PC-9 (cell line): ENCODE measurements at regions of chr20 and their contacts with region 1.

Region 1: GRCh38 chr20:53869466-53870258 is 200.7 kb downstream of the BCAS1 start:
- DNase-seq: peak; percentile 64 to 76
- H3K4me3 ChIP-seq: no peak overlapping the region
- H3K27ac ChIP-seq: peak overlapping the region; percentile 77
- H3K4me1 ChIP-seq: peaks cover 68% of the 10 kb centered on the region
- H3K27me3 ChIP-seq: no peaks in the 10 kb centered on the region
- CTCF ChIP-seq: peak; percentile 90

Region 2: GRCh38 chr20:53539516-53539915 is 330.1 kb before region 1 on chr20:
- CTCF ChIA-PET with region 1: no interaction called
- POLR2A ChIA-PET with region 1: no interaction called
- intact Hi-C with region 1: no loop called
- DNase-seq: no peak
- H3K4me3 ChIP-seq: no peak overlapping the region
- H3K27ac ChIP-seq: no peak overlapping the region
- H3K4me1 ChIP-seq: no peaks in the 10 kb centered on the region
- H3K27me3 ChIP-seq: no peaks in the 10 kb centered on the region
- CTCF ChIP-seq: no peak

Region 3: GRCh38 chr20:53594068-53595017 is 275.3 kb before region 1 on chr20:
- CTCF ChIA-PET with region 1: no interaction called
- POLR2A ChIA-PET with region 1: interaction called, 9 read pairs
- intact Hi-C with region 1: loop called (anchors 5 kb)
- DNase-seq: peak; percentile 73 to 98
- H3K4me3 ChIP-seq: peak overlapping the region; percentile 99
- H3K27ac ChIP-seq: peak overlapping the region; percentile 98
- H3K4me1 ChIP-seq: peaks cover 59% of the 10 kb centered on the region
- H3K27me3 ChIP-seq: no peaks in the 10 kb centered on the region
- CTCF ChIP-seq: no peak; the same call in 1 of the 2 replicates

Region 4: GRCh38 chr20:53656293-53657202 is 213.1 kb before region 1 on chr20:
- CTCF ChIA-PET with region 1: no interaction called
- POLR2A ChIA-PET with region 1: interaction called, 11 read pairs
- intact Hi-C with region 1: no loop called
- DNase-seq: peak in 1 of 2 experiments; percentile 78
- H3K4me3 ChIP-seq: peak overlapping the region; percentile 12; the same call in 1 of the 2 replicates
- H3K27ac ChIP-seq: peak overlapping the region; percentile 84
- H3K4me1 ChIP-seq: peaks cover 65% of the 10 kb centered on the region
- H3K27me3 ChIP-seq: no peaks in the 10 kb centered on the region
- CTCF ChIP-seq: no peak

Region 5: GRCh38 chr20:53786445-53787267 is 83.0 kb before region 1 on chr20:
- CTCF ChIA-PET with region 1: no interaction called
- POLR2A ChIA-PET with region 1: interaction called, 4 read pairs
- intact Hi-C with region 1: loop called (anchors 1 kb)
- DNase-seq: peak; percentile 44 to 97
- H3K4me3 ChIP-seq: peak overlapping the region; percentile 40; the same call in 1 of the 2 replicates
- H3K27ac ChIP-seq: peak overlapping the region; percentile 98
- H3K4me1 ChIP-seq: peaks cover 68% of the 10 kb centered on the region
- H3K27me3 ChIP-seq: no peaks in the 10 kb centered on the region
- CTCF ChIP-seq: no peak; the same call in 1 of the 2 replicates

Region 6: GRCh38 chr20:53894707-53895393 is 25.2 kb after region 1 on chr20:
- CTCF ChIA-PET with region 1: interaction called, 3 read pairs
- POLR2A ChIA-PET with region 1: interaction called, 21 read pairs
- intact Hi-C with region 1: no loop called
- DNase-seq: no peak
- H3K4me3 ChIP-seq: no peak overlapping the region
- H3K27ac ChIP-seq: no peak overlapping the region
- H3K4me1 ChIP-seq: peaks cover 28% of the 10 kb centered on the region
- H3K27me3 ChIP-seq: no peaks in the 10 kb centered on the region
- CTCF ChIP-seq: no peak

Region 7: DNA sequence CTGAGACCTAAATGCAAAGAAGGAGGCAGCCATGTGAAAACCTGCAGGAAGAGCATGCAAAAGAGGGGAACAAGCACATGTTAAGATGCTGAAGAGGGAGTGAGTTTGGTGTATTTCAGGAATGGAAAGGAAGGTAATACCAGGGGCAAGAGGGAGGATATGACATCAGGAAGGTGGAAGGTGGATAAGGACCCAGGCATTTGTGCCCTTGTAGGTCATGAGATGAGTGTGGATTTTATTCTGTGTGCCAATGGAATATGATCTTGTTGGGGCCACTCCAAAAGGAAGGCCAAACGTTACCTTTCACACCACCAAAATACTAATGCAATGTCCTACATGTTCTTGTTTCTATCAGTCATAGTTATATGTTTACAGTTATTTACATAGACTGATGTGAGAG is 588.6 kb after region 1 on chr20:
- CTCF ChIA-PET with region 1: no interaction called
- POLR2A ChIA-PET with region 1: no interaction called
- intact Hi-C with region 1: no loop called
- DNase-seq: no peak
- H3K4me3 ChIP-seq: no peak overlapping the region
- H3K27ac ChIP-seq: no peak overlapping the region
- H3K4me1 ChIP-seq: no peaks in the 10 kb centered on the region
- H3K27me3 ChIP-seq: no peaks in the 10 kb centered on the region
- CTCF ChIP-seq: no peak